ENCODE measurements at regions of chr19 and their contacts with region 1.

Region 1: DNA sequence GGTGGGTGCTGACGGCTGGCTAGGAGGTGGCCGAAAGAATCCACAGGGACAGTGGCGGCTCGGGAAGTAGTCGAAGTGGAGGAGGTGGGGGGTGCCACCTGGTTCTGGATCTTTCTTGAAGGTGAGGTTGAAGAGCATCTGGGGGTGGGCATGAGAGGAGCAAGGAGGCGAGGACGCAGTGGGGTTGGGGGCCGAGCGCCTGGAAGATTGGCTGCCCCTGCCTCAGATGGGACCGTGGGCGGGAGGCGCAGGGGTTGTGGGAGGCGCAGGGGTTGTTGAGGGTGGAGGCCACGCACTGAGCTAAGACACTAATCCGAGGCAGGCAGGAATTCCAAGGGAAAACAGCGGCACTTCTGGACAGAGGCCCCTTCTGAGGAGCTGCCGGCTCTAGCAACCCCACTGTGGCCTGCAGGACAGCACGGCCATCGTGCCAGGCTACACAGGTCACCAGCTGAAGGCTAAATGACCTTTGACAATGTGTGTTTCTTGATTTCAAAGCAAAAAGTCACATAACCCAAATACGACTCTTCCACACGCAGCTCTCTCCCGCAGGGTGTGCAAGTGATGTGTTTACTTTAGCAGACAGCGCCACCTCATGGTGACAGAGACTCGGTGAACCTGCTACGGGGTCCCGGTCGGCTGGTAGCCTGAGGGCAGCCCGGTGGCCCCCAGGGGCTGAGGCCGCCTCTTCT is 44.1 kb upstream of the RANBP3 start:
- DNase-seq: peak; percentile 71
- ATAC-seq: peak; percentile 92
- H3K4me3 Mint-ChIP-seq: no peak overlapping the region
- H3K27ac Mint-ChIP-seq: peak overlapping the region; percentile 12
- H3K4me1 Mint-ChIP-seq: peaks cover 3% of the 10 kb centered on the region
- H3K27me3 Mint-ChIP-seq: no peaks in the 10 kb centered on the region

Region 2: GRCh38 chr19:5803752-5804515 is 218.1 kb before region 1 on chr19:
- POLR2A ChIA-PET with region 1: interaction called, 11 read pairs
- DNase-seq: peak; percentile 99
- ATAC-seq: peak; percentile 96
- H3K4me3 Mint-ChIP-seq: peak overlapping the region; percentile 82
- H3K27ac Mint-ChIP-seq: no peak overlapping the region
- H3K4me1 Mint-ChIP-seq: peaks cover 20% of the 10 kb centered on the region
- H3K27me3 Mint-ChIP-seq: peaks cover 39% of the 10 kb centered on the region

Region 3: DNA sequence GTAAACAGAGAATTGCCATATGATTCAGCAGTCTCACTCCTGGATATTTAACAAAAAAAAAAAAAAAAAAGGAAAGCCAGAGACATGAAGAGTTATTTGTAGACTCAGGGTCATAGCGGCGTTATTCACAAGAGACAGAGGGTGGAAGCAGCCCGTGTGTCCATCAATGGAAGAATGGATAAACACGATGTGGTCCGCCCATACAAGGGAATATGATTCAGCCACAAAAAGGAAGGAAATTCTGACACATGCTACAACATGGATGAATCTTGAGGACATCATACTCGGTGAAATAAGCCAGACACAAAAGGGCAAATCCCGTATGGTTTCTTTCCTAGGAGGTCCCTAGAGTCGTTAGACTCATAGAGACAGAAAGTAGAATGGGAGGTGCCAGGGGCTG is 128.3 kb after region 1 on chr19:
- POLR2A ChIA-PET with region 1: no interaction called
- DNase-seq: no peak
- ATAC-seq: no peak
- H3K4me3 Mint-ChIP-seq: no peak overlapping the region
- H3K27ac Mint-ChIP-seq: no peak overlapping the region
- H3K4me1 Mint-ChIP-seq: no peaks in the 10 kb centered on the region
- H3K27me3 Mint-ChIP-seq: peaks cover 2% of the 10 kb centered on the region

Region 4: DNA sequence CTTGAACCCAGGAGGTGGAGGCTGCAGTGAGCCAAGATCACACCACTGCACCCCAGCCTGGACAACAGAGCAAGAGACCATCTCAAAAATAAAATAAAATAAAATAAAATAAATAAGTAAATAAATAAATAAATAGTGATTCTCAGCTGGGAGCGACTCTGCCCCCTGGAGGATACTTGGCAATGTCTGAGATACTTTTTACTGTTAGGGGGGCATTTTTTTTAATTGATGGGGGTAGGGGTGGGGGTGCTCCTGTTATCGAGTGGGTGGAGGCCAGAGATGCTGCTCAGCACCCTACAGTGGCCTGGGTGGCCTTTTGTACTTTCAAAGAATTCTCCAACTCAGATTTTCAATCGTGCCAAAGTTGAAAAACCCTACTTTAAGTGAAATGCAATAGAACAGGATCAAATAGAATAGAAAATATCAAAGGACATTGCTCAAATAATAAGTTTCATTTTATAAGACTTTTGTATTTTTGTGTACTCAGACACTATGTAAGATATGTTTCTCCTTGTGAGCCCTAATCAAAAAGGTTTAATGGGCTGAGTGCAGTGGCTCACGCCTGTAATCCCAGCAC is 332.2 kb after region 1 on chr19:
- POLR2A ChIA-PET with region 1: no interaction called
- DNase-seq: no peak
- ATAC-seq: no peak
- H3K4me3 Mint-ChIP-seq: no peak overlapping the region
- H3K27ac Mint-ChIP-seq: no peak overlapping the region
- H3K4me1 Mint-ChIP-seq: no peaks in the 10 kb centered on the region
- H3K27me3 Mint-ChIP-seq: no peaks in the 10 kb centered on the region